Heart right ventricle (tissue), 16 donors: ENCODE measurements at regions of chr22 and their contacts with region 1.

Region 1: DNA sequence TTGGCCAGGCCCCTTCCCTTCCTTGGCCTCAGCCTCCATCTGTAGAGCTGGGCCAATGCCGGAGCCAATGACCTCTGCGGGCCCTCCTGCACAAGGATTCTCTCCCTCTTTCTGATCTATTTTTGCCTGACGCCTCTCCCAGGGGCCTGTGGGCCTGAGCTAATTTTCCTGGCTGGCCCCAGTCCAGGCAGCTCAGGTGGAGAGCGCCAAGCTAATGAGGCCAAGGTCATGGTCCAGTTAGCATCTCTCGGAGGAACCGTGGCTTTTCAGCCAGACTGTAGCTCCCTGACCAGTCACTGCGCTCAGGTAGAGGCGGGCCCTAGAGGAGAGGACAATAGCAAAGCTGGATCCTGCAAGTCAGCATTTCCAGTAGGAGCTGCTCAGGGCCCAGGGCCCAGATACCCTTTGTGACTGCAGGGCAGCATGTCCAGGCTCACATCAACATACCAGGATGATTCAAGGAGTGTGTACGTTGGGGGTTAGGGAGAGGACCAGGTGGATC is 43.5 kb downstream of the APOL3 start:
- DNase-seq: no peak
- ATAC-seq: peak in 3 of 8 donors; percentile 33 to 49 (median 45)
- H3K4me3 ChIP-seq: no peak overlapping the region
- H3K27ac ChIP-seq: no peak overlapping the region
- H3K4me1 ChIP-seq: peaks cover 0 to 4% (median 0%) of the 10 kb centered on the region in 9 donors
- H3K27me3 ChIP-seq: no peaks in the 10 kb centered on the region
- CTCF ChIP-seq: no peak

Region 2: DNA sequence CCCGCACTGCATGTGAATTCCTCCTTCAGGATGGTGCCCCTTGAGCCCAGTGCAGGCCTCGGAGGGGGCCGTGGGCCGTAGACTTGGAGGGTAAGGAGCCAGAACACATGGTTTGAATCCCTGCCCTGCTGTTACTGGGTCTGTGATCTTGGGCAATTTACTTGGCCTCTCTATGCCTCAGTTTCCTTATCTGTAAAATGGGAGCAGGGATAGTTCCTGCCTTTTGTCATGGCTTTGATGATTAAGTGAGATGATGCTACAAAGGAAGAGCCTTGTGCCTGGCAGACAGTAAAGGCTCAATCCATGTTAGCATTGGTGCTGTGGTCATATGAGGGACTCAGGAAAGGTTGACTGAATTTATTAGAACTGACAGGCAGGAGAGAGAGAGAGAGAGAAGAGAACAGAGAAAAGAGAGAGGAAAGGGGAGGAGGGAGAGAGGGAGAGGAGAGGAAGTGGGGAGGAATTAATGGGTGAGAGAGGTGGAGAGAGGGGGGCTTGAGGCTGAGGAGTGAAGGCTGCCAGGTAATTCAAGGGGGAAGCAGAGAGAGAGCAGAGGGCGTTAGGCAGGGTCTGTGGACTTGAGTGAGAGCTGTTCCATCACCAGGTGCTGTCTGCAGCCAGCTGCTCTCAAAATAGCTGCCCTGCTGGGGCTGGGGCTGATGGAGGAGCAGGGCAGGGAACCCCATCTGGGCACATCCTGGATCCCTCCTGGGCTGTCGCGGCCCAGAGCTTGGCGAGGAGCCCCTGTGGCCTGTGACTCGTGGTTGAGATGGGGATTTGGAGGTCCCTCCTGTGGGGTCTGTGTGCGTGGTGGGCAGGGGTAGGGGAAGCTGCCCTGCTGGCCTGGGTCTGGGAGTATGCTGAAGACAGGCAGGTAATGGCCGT is 673.1 kb before region 1 on chr22:
- intact Hi-C with region 1: loop called in 3 of 10 experiments (anchors 5 to 10 kb)
- DNase-seq: no peak
- ATAC-seq: peak in 1 of 8 donors; percentile 11
- H3K4me3 ChIP-seq: no peak overlapping the region
- H3K27ac ChIP-seq: no peak overlapping the region
- H3K4me1 ChIP-seq: peaks cover 0 to 7% (median 0%) of the 10 kb centered on the region in 9 donors
- H3K27me3 ChIP-seq: no peaks in the 10 kb centered on the region
- CTCF ChIP-seq: no peak